ENCODE measurements at regions of chr5 and their contacts with region 1.

Region 1: GRCh38 chr5:173293817-173294672 is 34.2 kb downstream of the STC2 start:
- DNase-seq: peak in 2 of 3 donors; percentile 74 to 82
- ATAC-seq: peak; percentile 77
- H3K4me3 ChIP-seq: no peak overlapping the region
- H3K4me1 ChIP-seq: no peaks in the 10 kb centered on the region
- CTCF ChIP-seq: peak; percentile 46

Region 2: GRCh38 chr5:173331956-173332479 is 38.0 kb after region 1 on chr5:
- intact Hi-C with region 1: loop called (anchors 5 kb)
- DNase-seq: peak; percentile 78 to 89 (median 81)
- ATAC-seq: peak; percentile 89
- H3K4me3 ChIP-seq: no peak overlapping the region
- H3K4me1 ChIP-seq: peaks cover 29% of the 10 kb centered on the region
- CTCF ChIP-seq: peak; percentile 73

Region 3: DNA sequence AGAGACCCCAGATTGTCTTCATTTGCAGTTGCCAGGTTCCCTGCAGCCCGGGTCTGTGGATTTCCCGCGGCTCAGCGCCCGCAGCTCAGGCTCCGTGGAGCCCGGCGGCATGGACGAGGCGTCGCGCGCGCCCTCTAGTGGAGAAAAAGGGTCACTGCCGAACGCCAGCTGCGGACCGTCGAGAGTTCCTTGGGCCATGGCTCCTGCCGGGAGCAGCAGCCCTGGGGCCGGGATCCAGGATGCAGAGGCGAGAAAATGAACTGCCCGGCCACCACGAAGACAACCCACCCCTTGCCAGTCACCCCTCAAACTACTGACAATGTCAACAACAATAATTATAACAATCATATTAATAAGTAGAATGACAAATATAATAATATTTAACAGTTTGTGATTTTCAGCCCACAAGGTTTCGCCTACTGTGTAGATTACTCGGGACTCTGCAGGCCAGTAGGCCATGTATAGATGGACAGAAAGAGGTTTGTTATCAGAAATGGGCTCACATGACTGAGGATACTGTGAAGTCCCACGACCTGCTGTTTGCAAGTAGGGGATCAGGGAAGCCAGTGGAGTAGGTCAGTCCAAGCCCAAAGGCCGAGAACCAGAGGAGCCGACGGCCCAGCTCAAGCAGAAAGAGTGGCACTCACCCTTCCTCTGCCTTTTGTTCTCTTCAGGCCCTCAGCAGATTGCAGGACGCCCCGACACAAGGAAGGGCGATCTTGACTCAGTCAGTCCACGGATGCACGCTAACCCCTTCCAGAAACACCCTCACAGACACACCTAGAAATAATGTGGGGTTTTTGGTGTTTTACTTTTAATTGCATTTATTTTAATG is 279.3 kb after region 1 on chr5:
- intact Hi-C with region 1: loop called in 1 of 2 experiments (anchors 5 kb)
- DNase-seq: peak; percentile 61 to 82 (median 74)
- ATAC-seq: peak; percentile 94
- H3K4me3 ChIP-seq: no peak overlapping the region
- H3K4me1 ChIP-seq: no peaks in the 10 kb centered on the region
- CTCF ChIP-seq: peak; percentile 96

Measured in mucosa of descending colon (tissue), 3 donors.